ENCODE measurements at regions of chr12 and their contacts with region 1.

Region 1: DNA sequence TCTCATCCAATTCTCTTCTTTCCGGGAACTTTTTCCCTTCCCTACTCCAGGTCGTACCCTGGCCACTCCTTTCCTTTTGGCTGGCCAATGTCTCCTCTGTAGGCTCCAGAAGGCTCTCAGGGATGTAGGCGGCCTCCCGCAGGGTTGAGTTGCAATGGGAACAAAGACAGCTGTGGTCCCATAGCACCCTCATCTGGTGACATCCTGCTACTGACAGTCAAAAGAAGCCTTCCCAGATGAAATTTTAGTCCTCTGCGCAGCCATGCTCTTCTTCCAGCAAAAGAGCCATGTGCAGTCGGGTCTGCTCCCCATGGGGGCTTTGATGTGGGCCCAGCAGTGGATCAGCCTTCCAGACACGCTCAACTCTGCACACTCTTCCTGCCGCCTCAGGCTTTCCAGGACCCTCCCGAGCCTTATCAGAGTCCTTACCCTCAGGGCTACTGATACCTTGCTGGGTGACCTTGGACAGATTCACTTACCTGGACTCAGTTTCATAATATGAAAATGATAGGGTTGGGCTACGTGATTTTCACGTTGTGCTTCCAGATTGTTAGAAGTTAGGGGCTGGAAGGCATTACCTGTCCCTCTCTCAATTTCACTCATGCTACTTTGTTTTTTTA is 5.5 kb upstream of the CELA1 start:
- DNase-seq: peak; percentile 66
- ATAC-seq: peak; percentile 80
- H3K4me3 ChIP-seq: no peak overlapping the region
- H3K27ac ChIP-seq: no peak overlapping the region
- H3K4me1 ChIP-seq: peaks cover 2% of the 10 kb centered on the region; the same call in 1 of the 2 replicates
- H3K27me3 ChIP-seq: no peaks in the 10 kb centered on the region
- CTCF ChIP-seq: peak; percentile 86
- POLR2A ChIP-seq: no peak
- RAD21 ChIP-seq: peak; percentile 88

Region 2: DNA sequence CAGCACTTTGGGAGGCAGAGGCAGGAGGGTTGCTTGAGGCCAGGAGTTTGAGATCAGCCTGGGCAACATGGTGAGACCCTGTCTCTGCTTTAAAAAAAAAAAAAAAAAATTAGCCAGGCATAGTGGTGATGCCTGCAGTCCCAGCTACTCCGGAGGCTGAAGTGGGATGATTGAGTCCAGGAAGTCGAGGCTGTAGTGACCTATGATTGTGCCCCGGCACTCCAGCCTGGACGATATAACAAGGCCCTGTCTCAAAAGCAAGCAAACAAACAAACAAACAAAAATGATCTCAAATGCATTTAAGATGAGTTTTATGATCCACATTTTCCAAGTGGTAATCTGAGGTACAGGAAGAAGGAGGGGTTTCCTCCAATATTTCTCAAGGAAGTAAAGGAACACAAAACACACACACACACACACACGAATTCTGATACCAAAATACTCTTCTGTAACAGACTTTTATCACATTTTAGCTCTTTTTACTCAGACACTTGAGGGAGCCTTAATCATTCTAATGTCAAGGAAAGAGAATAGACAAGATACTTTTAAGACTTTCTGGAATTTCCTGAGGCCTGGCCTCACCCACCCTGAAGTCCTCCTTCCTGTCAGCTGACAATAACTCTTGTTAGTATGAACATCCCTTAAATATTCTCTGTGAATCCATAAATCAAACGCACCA is 1140.5 kb before region 1 on chr12:
- CTCF ChIA-PET with region 1: no interaction called
- POLR2A ChIA-PET with region 1: interaction called, 10 read pairs
- dilution Hi-C with region 1: no loop called
- in situ Hi-C with region 1: no loop called
- intact Hi-C with region 1: no loop called
- DNase-seq: no peak
- ATAC-seq: 0 out of 2 replicates have a peak, but pooled peaks have one; percentile 13
- H3K4me3 ChIP-seq: no peak overlapping the region
- H3K27ac ChIP-seq: no peak overlapping the region; the same call in 1 of the 2 replicates
- H3K4me1 ChIP-seq: peaks cover 6% of the 10 kb centered on the region
- H3K27me3 ChIP-seq: no peaks in the 10 kb centered on the region
- CTCF ChIP-seq: no peak
- POLR2A ChIP-seq: 0 out of 2 replicates have a peak, but pooled peaks have one; percentile 35
- RAD21 ChIP-seq: no peak

Region 3: DNA sequence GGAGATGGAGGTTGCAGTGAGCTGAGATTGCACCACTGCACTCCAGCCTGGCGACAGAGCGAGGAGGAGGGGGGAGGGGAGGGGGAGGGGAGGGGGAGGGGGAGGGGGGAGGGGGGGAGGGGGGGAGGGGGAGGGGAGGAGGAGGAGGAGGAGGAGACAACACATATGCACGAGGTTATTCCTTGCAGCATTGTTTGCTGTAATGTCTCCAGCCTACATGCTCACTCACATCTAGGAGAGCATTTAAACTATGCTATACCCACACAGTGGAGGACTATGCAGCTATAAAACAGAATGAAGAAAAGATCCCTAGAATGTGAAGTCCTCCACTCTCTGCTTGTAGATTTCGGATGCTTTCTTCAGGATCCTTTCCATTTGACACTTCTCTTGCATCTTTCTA is 403.2 kb before region 1 on chr12:
- CTCF ChIA-PET with region 1: no interaction called
- POLR2A ChIA-PET with region 1: no interaction called
- dilution Hi-C with region 1: no loop called
- in situ Hi-C with region 1: no loop called
- intact Hi-C with region 1: no loop called
- DNase-seq: peak; percentile 19
- ATAC-seq: no peak
- H3K4me3 ChIP-seq: no peak overlapping the region
- H3K27ac ChIP-seq: no peak overlapping the region
- H3K4me1 ChIP-seq: no peaks in the 10 kb centered on the region
- H3K27me3 ChIP-seq: no peaks in the 10 kb centered on the region
- CTCF ChIP-seq: no peak
- POLR2A ChIP-seq: no peak
- RAD21 ChIP-seq: no peak

Region 4: DNA sequence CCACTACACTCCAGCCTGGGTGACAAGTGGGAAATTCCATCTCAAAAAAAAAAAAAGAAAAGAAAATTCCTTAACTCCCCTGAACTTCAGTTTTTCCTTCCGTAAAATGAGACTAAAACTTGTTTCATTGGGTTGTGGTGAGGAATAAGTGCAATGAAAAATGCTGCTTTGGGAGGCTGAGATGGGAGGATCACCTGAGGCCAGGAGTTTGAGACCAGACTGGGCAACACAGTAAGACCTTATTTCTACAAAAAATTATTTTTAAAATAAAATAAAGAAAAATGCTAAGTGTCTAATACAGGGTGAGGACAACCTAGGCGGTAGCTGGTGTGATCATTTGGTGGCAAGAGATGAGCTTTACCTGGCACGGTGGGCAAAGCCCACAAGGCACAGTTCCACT is 88.7 kb before region 1 on chr12:
- CTCF ChIA-PET with region 1: no interaction called
- POLR2A ChIA-PET with region 1: no interaction called
- dilution Hi-C with region 1: no loop called
- in situ Hi-C with region 1: no loop called
- intact Hi-C with region 1: no loop called
- DNase-seq: no peak
- ATAC-seq: no peak
- H3K4me3 ChIP-seq: no peak overlapping the region
- H3K27ac ChIP-seq: no peak overlapping the region
- H3K4me1 ChIP-seq: 0 out of 2 replicates have a peak, but pooled peaks cover 2% of the 10 kb centered on the region
- H3K27me3 ChIP-seq: no peaks in the 10 kb centered on the region
- CTCF ChIP-seq: no peak
- POLR2A ChIP-seq: no peak
- RAD21 ChIP-seq: no peak

Region 5: DNA sequence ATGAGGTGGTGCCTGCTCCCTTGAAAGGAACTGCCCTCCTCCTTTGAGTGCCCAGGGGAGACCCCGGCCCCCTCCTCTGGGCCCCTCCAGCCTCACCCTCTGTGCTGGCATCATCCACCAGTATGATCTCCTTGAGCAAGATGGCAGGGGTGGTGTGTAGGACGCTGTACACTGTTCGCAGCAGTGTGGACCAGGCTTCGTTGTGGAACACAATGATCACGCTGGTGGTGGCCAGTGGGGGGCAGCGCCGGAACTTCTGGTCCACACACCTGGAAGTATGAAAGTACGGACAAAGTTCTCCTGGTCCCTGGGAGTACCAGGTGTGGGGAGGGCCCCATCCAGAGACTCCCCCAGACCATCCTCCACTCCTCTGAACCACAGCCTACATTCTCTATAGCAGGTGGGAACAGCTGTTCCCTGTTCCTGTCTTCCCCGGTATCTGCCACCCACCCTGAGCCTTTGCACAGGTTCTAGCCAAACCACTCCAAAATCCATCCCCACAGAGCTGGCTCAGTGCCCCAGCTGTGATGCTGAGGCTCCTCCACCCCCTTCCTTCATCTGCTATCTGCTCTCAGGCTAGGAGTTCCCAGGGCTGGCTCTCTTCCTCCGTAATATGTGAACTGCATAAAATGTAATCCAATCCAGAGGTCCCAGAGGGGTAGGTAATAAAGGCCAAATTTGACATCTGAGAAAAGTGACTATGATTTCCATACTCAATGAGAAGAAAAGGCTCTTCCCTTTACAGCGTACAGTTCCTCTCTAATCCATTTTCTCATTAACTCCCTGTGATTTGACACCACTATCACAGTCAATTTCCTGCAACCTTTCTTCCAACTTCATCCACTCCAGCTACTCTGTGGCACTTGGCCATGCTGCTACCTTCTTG is 25.3 kb after region 1 on chr12:
- CTCF ChIA-PET with region 1: no interaction called
- POLR2A ChIA-PET with region 1: no interaction called
- dilution Hi-C with region 1: no loop called
- in situ Hi-C with region 1: no loop called
- intact Hi-C with region 1: no loop called
- DNase-seq: no peak
- ATAC-seq: no peak
- H3K4me3 ChIP-seq: no peak overlapping the region
- H3K27ac ChIP-seq: no peak overlapping the region
- H3K4me1 ChIP-seq: peaks cover 14% of the 10 kb centered on the region
- H3K27me3 ChIP-seq: no peaks in the 10 kb centered on the region
- CTCF ChIP-seq: no peak
- POLR2A ChIP-seq: no peak
- RAD21 ChIP-seq: no peak

Measured in IMR-90 (cell line).